ENCODE measurements at regions of chr2 and their contacts with region 1.

Region 1: GRCh38 chr2:166106431-166107015 is 21.3 kb downstream of the SCN1A start:
- DNase-seq: peak; percentile 23
- ATAC-seq: peak; percentile 66; the same call in 1 of the 2 replicates
- H3K4me3 ChIP-seq: no peak overlapping the region
- H3K27ac ChIP-seq: no peak overlapping the region
- H3K4me1 ChIP-seq: no peaks in the 10 kb centered on the region
- H3K27me3 ChIP-seq: no peaks in the 10 kb centered on the region
- CTCF ChIP-seq: peak; percentile 45
- POLR2A ChIP-seq: no peak
- RAD21 ChIP-seq: peak; percentile 56

Region 2: GRCh38 chr2:165953655-165954606 is 152.6 kb before region 1 on chr2 and contains the start of gene TTC21B:
- CTCF ChIA-PET with region 1: interaction called, 4 read pairs
- POLR2A ChIA-PET with region 1: no interaction called
- dilution Hi-C with region 1: no loop called
- in situ Hi-C with region 1: no loop called
- intact Hi-C with region 1: loop called (anchors 1 kb)
- DNase-seq: peak; percentile 95
- ATAC-seq: peak; percentile 99
- H3K4me3 ChIP-seq: peak within 1 kb of the TSS; percentile 64
- H3K27ac ChIP-seq: peak within 1 kb of the TSS; percentile 45
- H3K4me1 ChIP-seq: no peaks in the 10 kb centered on the region
- H3K27me3 ChIP-seq: no peaks in the 10 kb centered on the region
- CTCF ChIP-seq: peak; percentile 84
- POLR2A ChIP-seq: peak; percentile 81
- RAD21 ChIP-seq: peak; percentile 54
- total RNA-seq, gene TTC21B: 17.2 and 23.1 TPM in 2 replicates

Region 3: DNA sequence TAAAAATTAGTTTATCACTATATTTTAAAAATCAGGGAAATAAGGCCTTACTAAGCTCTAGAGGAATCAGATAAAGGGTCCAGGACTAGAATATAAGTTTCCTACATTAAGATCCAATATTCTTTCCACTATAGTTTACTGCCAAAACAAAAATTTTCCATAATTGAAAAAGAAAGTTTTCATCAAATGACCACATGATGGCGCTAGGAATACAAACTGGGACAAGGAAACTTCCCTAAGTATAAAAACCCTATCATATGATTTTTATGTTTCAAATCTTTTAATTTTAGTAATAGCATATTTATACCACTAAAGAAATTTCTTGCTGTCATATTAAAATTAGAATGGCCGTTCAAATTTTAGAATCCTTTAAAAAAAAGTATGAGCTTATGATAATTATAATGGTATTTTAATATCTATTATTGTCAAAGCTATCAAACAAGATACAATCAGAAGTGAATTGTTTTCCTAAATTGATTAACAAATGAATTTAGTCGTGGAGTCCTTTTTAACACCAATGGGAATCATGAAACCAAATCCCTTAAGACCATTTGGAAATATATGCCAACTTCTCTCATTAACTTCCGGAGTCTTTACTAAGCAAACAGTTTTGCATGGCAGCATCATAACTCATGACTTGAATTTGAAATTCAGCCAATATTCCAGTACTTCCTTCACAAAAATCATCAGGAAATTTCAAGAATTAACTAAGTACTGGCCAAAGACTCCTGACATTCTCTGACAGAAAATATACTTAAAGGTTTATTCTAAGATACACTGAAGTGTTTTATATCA is 49.0 kb before region 1 on chr2:
- CTCF ChIA-PET with region 1: interaction called, 3 read pairs
- POLR2A ChIA-PET with region 1: no interaction called
- dilution Hi-C with region 1: no loop called
- in situ Hi-C with region 1: no loop called
- intact Hi-C with region 1: loop called (anchors 1 kb)
- DNase-seq: peak; percentile 45
- ATAC-seq: peak; percentile 44; the same call in 1 of the 2 replicates
- H3K4me3 ChIP-seq: no peak overlapping the region
- H3K27ac ChIP-seq: no peak overlapping the region
- H3K4me1 ChIP-seq: no peaks in the 10 kb centered on the region
- H3K27me3 ChIP-seq: no peaks in the 10 kb centered on the region
- CTCF ChIP-seq: peak; percentile 66
- POLR2A ChIP-seq: no peak
- RAD21 ChIP-seq: peak; percentile 68

Region 4: DNA sequence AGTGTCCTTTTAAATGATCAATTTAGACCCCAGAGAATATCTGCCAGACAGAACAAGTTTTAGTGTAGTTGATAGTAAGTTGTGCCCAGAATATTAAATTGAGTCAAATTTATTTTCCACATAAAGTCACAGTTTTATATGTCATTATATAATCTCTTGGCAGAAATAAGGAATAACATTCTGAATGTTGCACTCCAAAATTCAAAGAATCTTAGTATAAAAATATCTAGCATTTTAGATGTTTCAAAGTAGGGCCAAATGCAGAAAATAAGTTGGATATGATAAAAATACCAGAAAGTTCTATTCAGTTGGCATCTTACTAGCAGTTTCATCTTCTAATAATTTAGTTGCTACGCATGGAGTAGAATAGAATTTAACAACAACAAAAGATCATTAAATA is 12.2 kb before region 1 on chr2:
- CTCF ChIA-PET with region 1: interaction called, 10 read pairs
- POLR2A ChIA-PET with region 1: no interaction called
- dilution Hi-C with region 1: no loop called
- in situ Hi-C with region 1: no loop called
- intact Hi-C with region 1: no loop called
- DNase-seq: no peak
- ATAC-seq: no peak
- H3K4me3 ChIP-seq: no peak overlapping the region
- H3K27ac ChIP-seq: no peak overlapping the region
- H3K4me1 ChIP-seq: peaks cover 3% of the 10 kb centered on the region
- H3K27me3 ChIP-seq: no peaks in the 10 kb centered on the region
- CTCF ChIP-seq: no peak
- POLR2A ChIP-seq: no peak
- RAD21 ChIP-seq: no peak

Region 5: GRCh38 chr2:166158546-166158945 is 52.0 kb after region 1 on chr2:
- CTCF ChIA-PET with region 1: no interaction called
- POLR2A ChIA-PET with region 1: no interaction called
- dilution Hi-C with region 1: no loop called
- in situ Hi-C with region 1: no loop called
- intact Hi-C with region 1: no loop called
- DNase-seq: no peak
- ATAC-seq: no peak
- H3K4me3 ChIP-seq: no peak overlapping the region
- H3K27ac ChIP-seq: no peak overlapping the region
- H3K4me1 ChIP-seq: peaks cover 6% of the 10 kb centered on the region; the same call in 1 of the 2 replicates
- H3K27me3 ChIP-seq: no peaks in the 10 kb centered on the region
- CTCF ChIP-seq: no peak
- POLR2A ChIP-seq: no peak
- RAD21 ChIP-seq: no peak

Region 6: DNA sequence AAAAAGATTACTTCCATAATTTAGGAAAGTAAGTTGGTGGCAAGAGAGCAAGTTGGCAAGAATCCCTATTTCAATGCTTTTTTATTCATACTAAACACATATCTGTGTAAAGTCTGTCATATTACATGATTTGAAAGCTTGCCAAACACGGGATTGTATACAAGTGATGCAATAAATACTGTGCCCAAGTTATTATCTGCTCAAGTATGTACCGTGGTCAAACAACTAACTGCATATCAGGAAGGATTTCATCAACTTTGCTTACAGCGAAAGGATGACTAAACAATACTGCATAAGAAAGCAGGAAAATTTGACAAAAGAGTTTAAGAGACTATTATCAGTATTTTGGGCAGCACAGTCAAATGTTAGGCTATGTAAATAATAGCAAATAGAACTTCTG is 90.9 kb after region 1 on chr2:
- CTCF ChIA-PET with region 1: no interaction called
- POLR2A ChIA-PET with region 1: no interaction called
- dilution Hi-C with region 1: no loop called
- in situ Hi-C with region 1: no loop called
- intact Hi-C with region 1: no loop called
- DNase-seq: peak; percentile 38
- ATAC-seq: no peak
- H3K4me3 ChIP-seq: no peak overlapping the region
- H3K27ac ChIP-seq: no peak overlapping the region
- H3K4me1 ChIP-seq: no peaks in the 10 kb centered on the region
- H3K27me3 ChIP-seq: no peaks in the 10 kb centered on the region
- CTCF ChIP-seq: no peak
- POLR2A ChIP-seq: no peak
- RAD21 ChIP-seq: no peak